ENCODE measurements at regions of chr7 and their contacts with region 1.

Region 1: DNA sequence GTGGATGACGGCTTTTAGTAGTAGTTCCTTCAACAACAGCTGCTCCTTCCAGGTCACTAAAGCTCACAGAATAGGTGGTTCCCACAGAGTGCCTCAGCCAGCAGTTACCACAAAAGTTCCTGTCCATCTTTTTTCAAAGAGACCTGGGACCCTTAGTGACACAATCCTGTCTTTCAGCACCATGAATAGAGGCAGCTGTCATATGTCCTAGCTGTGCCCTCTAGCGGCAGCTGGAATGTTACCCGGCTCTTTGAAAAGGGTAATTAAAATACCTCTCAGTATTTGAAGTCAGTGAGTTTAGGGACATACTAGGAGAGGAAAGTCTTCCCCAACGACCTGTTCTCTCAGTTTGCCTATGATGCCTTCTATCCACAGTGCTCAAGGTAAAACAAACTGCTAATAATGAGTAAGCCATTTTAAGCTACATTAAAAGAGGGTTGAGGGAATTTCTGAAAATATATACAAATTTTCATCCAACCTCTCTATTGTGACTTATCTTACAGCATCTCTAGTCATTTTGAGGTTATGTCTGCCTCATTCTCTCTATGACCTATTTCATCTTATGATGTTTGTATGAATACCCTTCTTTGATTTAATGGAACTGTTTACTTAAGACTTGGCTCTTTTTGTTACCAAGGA is 290.8 kb downstream of the NXPH1 start:
- DNase-seq: peak; percentile 42
- H3K4me3 ChIP-seq: no peak overlapping the region
- H3K27ac ChIP-seq: no peak overlapping the region
- H3K4me1 ChIP-seq: no peaks in the 10 kb centered on the region
- H3K27me3 ChIP-seq: no peaks in the 10 kb centered on the region
- CTCF ChIP-seq: peak; percentile 39

Region 2: DNA sequence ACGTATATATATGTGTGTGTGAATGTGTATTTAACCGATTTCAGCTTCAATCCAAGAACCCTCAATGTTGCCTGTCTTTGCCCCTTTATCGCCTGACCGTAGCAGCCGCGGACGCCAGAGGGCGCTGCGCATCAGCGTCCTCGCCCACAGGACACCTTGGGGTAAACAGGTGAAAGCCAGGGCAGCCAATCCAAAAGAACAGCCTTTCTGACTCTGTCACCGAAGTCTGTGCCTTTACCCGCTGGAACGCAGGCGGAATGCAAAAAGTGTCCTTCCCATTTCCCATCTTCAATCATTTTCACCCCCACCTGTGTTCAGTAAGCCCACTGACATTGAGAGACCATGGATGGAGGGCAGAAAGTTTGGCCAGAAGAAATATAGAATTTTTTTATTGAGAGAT is 287.2 kb before region 1 on chr7:
- intact Hi-C with region 1: loop called (anchors 5 kb)
- DNase-seq: peak; percentile 48
- H3K4me3 ChIP-seq: no peak overlapping the region
- H3K27ac ChIP-seq: no peak overlapping the region
- H3K4me1 ChIP-seq: no peaks in the 10 kb centered on the region
- H3K27me3 ChIP-seq: peaks cover 53% of the 10 kb centered on the region
- CTCF ChIP-seq: peak; percentile 56